Thyroid gland (tissue), 4 donors: ENCODE measurements at regions of chr1 and their contacts with region 1.

Region 1: GRCh38 chr1:3012456-3013291 is 8.6 kb upstream of the ACTRT2 start:
- DNase-seq: peak; percentile 74 to 77
- H3K4me3 ChIP-seq: no peak overlapping the region
- H3K27ac ChIP-seq: no peak overlapping the region
- H3K4me1 ChIP-seq: peaks cover 17 to 21% of the 10 kb centered on the region in 2 donors
- H3K27me3 ChIP-seq: no peaks in the 10 kb centered on the region
- CTCF ChIP-seq: peak; percentile 29 to 93 (median 56)
- POLR2A ChIP-seq: no peak

Region 2: GRCh38 chr1:2906085-2906484 is 106.6 kb before region 1 on chr1:
- intact Hi-C with region 1: no loop called
- DNase-seq: peak; percentile 33
- H3K4me3 ChIP-seq: no peak overlapping the region
- H3K27ac ChIP-seq: no peak overlapping the region
- H3K4me1 ChIP-seq: no peaks in the 10 kb centered on the region
- H3K27me3 ChIP-seq: no peaks in the 10 kb centered on the region
- CTCF ChIP-seq: no peak
- POLR2A ChIP-seq: no peak

Region 3: GRCh38 chr1:3410142-3410925 is 397.7 kb after region 1 on chr1:
- intact Hi-C with region 1: loop called (anchors 5 kb)
- DNase-seq: peak; percentile 83 to 87
- H3K4me3 ChIP-seq: no peak overlapping the region
- H3K27ac ChIP-seq: no peak overlapping the region
- H3K4me1 ChIP-seq: no peaks in the 10 kb centered on the region
- H3K27me3 ChIP-seq: no peaks in the 10 kb centered on the region
- CTCF ChIP-seq: peak; percentile 44 to 90 (median 85)
- POLR2A ChIP-seq: no peak